Activated naive CD4-positive, alpha-beta T cell treated with anti-CD3 and anti-CD28 coated beads for 36 hours (primary cell): ENCODE measurements at regions of chr3 and their contacts with region 1.

Region 1: DNA sequence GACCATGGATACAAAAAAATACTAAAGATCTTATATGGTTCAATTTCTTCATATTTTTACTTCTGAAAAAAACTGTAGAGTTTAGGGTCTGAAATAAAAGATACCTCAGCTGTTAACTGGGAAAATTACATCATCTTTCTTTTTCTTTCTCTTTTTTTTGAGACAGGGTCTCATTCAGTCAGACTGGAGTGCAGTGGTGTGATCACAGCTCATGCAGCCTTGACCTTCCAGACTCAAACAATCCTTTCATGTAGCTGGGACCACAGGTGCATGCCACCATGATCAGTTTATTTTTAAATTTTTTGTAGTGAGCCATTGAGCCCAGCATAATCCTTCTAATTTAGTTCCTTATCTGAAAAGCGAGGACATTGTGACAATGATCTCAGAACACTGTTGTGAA is 39.6 kb upstream of the TKT start:
- DNase-seq: no peak
- H3K4me3 Mint-ChIP-seq: no peak overlapping the region
- H3K27ac Mint-ChIP-seq: no peak overlapping the region
- H3K4me1 Mint-ChIP-seq: peaks cover 3% of the 10 kb centered on the region
- H3K27me3 Mint-ChIP-seq: no peaks in the 10 kb centered on the region

Region 2: DNA sequence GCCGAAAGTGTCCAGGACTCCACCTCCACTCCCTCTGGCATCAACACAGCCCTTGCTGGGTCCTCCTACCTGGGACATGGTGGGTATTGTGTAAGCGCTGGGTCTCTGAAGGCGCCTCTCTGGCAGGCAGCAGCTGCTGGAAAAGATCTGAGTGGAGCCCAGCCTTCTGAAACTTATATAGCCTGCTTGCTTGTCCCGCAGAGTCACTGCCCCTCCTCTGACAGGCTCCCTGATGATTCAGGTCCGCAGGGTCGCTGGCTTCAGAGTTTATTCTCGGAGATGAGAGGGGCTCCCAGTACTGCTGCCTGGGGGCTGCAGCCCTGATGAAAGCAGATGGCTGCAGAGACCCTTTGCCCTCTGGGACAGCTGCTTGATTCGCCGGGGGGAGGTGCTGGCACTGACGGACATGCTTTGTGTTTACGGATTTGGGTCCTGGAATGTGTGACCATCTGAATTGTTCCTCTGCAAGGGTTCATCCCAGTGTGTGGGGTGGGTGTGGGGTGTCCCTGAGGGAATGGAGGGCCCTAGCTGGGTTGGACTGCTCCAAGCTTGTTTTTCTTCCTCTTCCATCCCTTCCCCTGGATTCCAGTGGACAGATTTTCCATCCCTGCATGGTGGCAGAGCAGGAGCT is 460.4 kb before region 1 on chr3 and contains the start of gene MUSTN1:
- CTCF ChIA-PET with region 1: no interaction called
- intact Hi-C with region 1: no loop called
- DNase-seq: no peak
- H3K4me3 Mint-ChIP-seq: no peak within 1 kb of the TSS
- H3K27ac Mint-ChIP-seq: no peak within 1 kb of the TSS
- H3K4me1 Mint-ChIP-seq: peaks cover 20% of the 10 kb centered on the region
- H3K27me3 Mint-ChIP-seq: no peaks in the 10 kb centered on the region
- total RNA-seq, gene MUSTN1: 0.57 TPM in 1 of 2 experiments, not detected in the other

Region 3: DNA sequence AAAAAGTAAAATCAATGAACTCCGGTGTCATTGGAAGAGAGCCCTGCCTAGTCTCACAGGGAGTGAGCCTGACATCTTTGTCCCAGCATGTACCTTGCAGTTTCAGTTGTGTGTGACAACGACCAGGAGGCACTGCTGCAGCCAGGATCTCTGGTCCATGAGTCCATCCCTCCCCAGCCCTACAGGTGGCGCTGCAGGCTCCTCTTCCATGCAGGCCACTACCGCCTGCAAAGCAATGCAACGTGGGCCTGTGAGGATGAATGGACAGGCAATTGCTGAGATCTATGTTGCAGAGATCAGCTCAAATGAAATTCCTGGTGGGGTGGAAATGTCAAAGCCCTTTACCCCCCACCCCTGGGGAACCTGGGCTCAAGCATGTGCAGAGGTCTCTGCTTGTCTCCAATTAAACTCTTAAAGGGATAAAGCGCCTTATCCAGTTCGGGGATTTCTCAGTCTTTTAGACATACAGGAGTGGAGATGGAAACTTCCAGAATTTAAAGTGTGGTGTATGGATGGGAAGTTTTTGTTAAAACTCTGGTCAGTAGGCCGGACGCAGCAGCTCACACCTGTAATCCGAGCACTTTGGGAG is 75.4 kb before region 1 on chr3:
- CTCF ChIA-PET with region 1: interaction called, 3 read pairs
- intact Hi-C with region 1: loop called (anchors 5 kb)
- DNase-seq: peak; percentile 91
- H3K4me3 Mint-ChIP-seq: no peak overlapping the region
- H3K27ac Mint-ChIP-seq: no peak overlapping the region
- H3K4me1 Mint-ChIP-seq: peaks cover 1% of the 10 kb centered on the region
- H3K27me3 Mint-ChIP-seq: no peaks in the 10 kb centered on the region

Region 4: DNA sequence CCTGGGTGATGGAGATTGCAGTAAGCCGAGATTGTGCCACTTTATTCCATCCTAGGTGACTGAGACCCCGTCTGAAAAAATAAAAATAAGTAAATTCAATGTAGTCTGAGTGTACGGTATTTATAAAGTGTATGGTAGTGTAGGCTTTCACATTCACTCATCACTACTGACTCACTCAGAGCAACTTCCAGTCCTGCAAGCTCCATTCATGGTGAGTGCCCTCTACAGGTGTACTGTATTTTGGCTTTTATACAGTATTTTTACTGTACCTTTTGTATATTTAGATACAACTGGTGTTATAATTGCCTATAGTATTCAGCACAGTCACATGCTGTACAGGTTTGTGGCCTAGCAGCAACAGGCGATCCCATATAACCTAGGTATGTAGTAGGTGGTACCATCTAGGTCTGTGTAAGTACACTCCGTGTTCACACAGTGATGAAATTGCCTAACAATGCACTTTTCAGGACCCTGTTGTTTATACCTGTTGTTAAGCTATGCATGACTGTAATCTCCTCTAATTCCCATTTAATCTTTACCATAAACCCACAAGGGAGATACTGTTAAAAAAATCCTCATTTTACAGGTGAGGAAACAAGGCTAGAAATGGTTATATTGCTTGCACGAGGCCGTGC is 218.3 kb after region 1 on chr3:
- CTCF ChIA-PET with region 1: no interaction called
- intact Hi-C with region 1: loop called (anchors 5 kb)
- DNase-seq: peak; percentile 35
- H3K4me3 Mint-ChIP-seq: no peak overlapping the region
- H3K27ac Mint-ChIP-seq: no peak overlapping the region
- H3K4me1 Mint-ChIP-seq: no peaks in the 10 kb centered on the region
- H3K27me3 Mint-ChIP-seq: peaks cover 21% of the 10 kb centered on the region